Activated T-helper 1 cell treated with anti-CD3 and anti-CD28 coated beads, Interleukin-12 subunit alpha, Interleukin-12 subunit beta, Interleukin-2, Interleukin-4 antibody, amounts not matched to agents 30 ng/mL and 10 ng/mL and 1 ng/mL, durations not matched to agents 14 hours and 24 hours and 36 hours (primary cell): ENCODE measurements at regions of chr13 and their contacts with region 1.

Region 1: GRCh38 chr13:95676762-95677563 is at the start of gene DNAJC3:
- DNase-seq: peak; percentile 99
- H3K4me3 Mint-ChIP-seq: peak within 1 kb of the TSS; percentile 93
- H3K27ac Mint-ChIP-seq: peak within 1 kb of the TSS; percentile 86
- H3K4me1 Mint-ChIP-seq: peaks cover 50% of the 10 kb centered on the region
- H3K27me3 Mint-ChIP-seq: peaks cover 3% of the 10 kb centered on the region
- total RNA-seq, gene DNAJC3: 27.9 and 30.1 TPM in 2 replicates

Region 2: DNA sequence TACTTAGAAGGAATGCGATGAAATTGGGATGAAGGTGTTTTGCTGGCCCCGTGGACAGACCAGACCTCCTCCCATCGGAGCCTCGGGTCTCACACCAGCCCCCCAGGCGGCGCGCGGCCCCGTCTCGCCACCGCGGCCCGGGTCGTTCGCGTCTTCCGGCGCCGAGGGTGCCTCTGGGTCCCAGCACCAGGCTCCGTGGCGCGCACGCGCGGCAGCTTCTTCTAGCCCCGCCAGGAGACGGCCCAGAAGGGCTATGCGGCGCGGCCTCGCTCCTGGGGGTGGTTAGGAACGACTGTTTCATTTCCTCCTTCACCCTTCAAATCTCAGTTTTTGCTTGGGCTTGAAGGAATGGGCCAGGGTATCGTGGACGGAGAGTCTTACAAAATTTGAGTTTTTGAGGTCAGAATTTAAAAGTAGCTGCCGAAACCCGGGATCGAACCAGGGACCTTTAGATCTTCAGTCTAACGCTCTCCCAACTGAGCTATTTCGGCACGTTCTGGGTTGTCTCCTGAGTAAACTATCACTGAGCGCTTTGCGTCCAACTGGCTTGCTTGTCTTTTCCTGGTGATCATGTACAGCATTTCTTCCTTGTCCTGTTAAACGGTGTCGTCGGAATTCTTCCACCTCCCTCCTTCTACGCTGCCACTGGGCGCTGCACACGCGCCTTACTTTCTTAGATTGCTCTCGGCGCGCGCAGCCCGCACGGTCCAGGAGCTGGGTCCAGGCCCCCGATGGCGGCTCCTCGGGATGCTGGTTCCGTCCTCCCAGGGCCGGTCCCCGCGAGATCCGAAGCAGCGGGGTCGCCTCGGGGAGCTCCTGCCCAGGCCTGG is 1127.5 kb before region 1 on chr13:
- intact Hi-C with region 1: loop called (anchors 1 kb)
- DNase-seq: peak; percentile 87
- H3K4me3 Mint-ChIP-seq: peak overlapping the region; percentile 84
- H3K27ac Mint-ChIP-seq: peak overlapping the region; percentile 99
- H3K4me1 Mint-ChIP-seq: peaks cover 25% of the 10 kb centered on the region
- H3K27me3 Mint-ChIP-seq: peaks cover 15% of the 10 kb centered on the region

Region 3: GRCh38 chr13:95185851-95186250 is 491.1 kb before region 1 on chr13:
- intact Hi-C with region 1: loop called (anchors 5 kb)
- DNase-seq: peak; percentile 48
- H3K4me3 Mint-ChIP-seq: peak overlapping the region; percentile 34
- H3K27ac Mint-ChIP-seq: peak overlapping the region; percentile 37
- H3K4me1 Mint-ChIP-seq: peaks cover 53% of the 10 kb centered on the region
- H3K27me3 Mint-ChIP-seq: no peaks in the 10 kb centered on the region

Region 4: GRCh38 chr13:95536632-95537241 is 140.2 kb before region 1 on chr13:
- intact Hi-C with region 1: loop called (anchors 1 kb)
- DNase-seq: no peak
- H3K4me3 Mint-ChIP-seq: no peak overlapping the region
- H3K27ac Mint-ChIP-seq: no peak overlapping the region
- H3K4me1 Mint-ChIP-seq: peaks cover 8% of the 10 kb centered on the region
- H3K27me3 Mint-ChIP-seq: peaks cover 10% of the 10 kb centered on the region

Region 5: DNA sequence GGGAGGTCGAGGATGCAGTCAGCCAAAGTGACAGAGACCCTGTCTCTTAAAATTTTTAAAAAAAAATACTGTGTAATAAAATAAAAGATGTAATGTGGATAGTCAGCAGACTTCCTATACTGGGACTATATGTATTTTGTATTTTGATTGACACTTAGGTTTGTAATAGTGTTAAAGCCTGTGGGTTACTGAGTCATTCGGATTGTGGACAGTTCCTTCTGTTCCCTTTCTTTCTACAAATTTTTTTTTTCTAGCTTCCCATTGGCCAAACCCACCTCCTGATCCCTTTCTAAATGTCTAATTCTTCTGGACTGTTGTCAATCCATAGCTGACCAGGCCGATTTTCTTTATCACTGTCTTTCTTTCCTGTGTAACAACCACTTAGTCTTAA is 107.9 kb after region 1 on chr13:
- intact Hi-C with region 1: loop called (anchors 5 kb)
- DNase-seq: no peak
- H3K4me3 Mint-ChIP-seq: no peak overlapping the region
- H3K27ac Mint-ChIP-seq: no peak overlapping the region
- H3K4me1 Mint-ChIP-seq: no peaks in the 10 kb centered on the region
- H3K27me3 Mint-ChIP-seq: no peaks in the 10 kb centered on the region